Posterior cingulate gyrus (tissue), 11 donors: ENCODE measurements at regions of chr11 and their contacts with region 1.

Region 1: DNA sequence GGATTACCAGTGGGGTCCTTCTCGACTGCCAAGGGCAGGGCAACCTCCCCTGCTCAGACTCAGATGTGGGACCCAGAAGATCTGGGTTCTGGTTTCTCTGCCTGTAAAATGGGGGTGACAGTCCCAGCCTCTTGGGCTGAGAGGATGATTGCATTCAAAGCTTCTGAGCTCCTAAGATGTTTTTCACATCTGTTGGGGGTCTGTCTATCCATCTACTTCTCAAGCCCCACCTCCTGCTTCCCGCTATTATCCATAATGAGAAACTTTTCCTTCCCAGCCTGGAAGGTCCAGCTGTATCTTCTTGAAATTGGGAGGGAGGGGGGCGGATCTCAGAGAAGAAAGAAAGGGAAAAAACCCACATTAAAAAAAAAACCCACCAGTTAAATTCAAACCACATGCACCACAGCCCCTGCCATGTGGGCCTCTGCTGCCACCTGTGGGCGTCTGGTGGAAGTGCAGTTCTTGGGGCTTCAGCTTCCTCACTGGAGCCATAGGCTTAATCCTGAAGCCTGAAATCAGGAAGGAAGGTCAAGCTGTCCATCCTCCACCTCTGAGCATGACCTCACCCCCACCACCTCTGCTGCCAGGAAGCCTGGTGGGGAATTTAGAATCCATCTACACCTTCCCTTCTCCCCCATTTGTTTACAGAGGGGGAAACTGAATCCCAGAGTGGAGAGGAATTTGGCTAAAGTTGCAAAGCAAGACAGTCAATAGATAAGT is 27.3 kb downstream of the ARHGEF17 start:
- DNase-seq: peak; percentile 72 to 98 (median 92)

Region 2: DNA sequence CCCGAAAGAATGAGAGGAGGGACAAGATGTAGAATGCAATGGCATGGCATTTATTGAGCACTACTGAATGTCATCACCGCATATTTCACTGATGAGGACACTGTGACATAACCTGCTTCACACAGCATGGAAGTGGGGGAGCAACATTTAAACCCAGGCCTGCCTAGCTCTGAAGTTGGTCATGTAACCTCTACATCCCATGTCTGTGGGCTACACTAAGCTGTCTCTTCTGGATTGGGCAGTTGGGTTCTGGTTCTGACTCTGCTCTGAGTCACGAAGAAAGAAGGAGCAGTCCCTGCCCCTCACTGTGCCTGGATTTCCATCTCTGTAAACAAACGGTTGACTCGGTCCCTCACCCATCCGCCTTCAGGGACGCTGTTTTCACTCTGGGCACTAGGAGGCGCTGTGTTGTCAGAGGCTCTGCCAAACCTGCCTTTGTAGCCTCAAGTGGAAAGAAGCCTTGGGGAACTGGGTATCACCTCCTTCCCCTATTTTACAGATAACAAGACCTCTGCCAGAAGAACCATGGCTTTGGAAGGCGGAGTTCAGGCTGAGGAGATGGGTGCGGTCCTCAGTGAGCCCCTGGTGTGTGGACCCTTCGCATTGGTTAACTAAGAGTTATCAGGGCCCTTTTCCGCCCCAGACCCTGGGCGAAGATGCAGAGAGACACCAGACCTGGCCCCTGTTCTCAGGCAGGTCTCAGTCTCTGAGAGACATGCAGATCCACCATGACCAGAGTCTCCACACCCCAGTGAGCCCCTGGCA is 40.0 kb before region 1 on chr11:
- intact Hi-C with region 1: no loop called
- DNase-seq: peak in 7 of 10 donors; percentile 49 to 92 (median 72)

Region 3: GRCh38 chr11:73307323-73308002 is 27.9 kb before region 1 on chr11:
- intact Hi-C with region 1: loop called (anchors 1 kb)
- DNase-seq: peak; percentile 90 to 99 (median 96)

Region 4: DNA sequence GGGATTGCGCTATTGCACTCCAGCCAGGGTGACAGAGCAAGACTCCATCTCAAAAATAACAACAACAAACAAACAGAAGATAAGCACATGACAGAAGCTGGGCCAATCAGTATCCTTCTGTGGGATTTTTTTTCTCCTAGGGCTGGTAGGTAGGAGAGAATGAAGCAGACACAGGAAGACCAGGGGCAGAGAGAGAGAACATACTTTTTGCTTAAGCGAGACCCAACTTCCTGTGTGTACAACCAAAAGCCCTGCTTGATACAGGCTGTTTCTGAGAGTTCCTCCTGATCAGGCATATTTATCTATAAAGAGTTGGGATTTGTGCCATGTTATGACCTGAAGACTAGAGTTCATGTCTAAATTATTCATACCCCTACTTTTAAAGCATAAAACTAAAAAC is 298.6 kb after region 1 on chr11:
- intact Hi-C with region 1: no loop called
- DNase-seq: no peak